ENCODE measurements at regions of chr6 and their contacts with region 1.

Region 1: DNA sequence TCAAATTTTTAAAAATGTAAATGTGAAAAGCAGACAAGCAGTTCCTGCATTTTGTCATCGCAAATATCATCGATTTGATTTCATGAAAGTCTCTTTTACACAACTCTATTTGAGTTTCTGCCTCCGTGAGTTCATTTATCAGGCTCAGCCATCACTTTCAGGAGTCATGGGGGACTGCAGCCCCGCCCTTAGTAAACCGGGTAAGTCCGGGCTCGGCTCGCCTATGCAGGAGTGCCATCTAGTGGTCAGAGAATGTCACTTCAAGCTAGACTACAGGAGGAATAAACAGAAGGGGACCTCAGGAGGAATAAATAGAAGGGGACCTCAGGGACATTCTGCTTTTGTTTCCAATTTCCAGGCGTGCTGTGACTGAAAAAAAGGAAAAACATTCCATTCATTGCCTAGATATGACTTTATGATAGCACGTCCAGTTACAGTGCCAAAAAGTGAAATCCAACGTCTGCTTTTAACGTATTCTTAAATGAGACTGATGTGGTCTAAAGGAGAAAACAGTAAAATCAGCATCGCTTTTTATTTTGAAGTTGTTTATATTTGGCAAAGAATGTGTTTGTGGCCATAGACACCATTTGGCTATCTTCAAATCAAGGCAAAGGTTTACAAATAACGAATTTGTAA is 333.9 kb downstream of the HACE1 start:
- DNase-seq: peak; percentile 75
- H3K4me3 Mint-ChIP-seq: peak overlapping the region; percentile 27
- H3K27ac Mint-ChIP-seq: no peak overlapping the region
- H3K4me1 Mint-ChIP-seq: peaks cover 5% of the 10 kb centered on the region
- H3K27me3 Mint-ChIP-seq: peaks cover 9% of the 10 kb centered on the region

Region 2: DNA sequence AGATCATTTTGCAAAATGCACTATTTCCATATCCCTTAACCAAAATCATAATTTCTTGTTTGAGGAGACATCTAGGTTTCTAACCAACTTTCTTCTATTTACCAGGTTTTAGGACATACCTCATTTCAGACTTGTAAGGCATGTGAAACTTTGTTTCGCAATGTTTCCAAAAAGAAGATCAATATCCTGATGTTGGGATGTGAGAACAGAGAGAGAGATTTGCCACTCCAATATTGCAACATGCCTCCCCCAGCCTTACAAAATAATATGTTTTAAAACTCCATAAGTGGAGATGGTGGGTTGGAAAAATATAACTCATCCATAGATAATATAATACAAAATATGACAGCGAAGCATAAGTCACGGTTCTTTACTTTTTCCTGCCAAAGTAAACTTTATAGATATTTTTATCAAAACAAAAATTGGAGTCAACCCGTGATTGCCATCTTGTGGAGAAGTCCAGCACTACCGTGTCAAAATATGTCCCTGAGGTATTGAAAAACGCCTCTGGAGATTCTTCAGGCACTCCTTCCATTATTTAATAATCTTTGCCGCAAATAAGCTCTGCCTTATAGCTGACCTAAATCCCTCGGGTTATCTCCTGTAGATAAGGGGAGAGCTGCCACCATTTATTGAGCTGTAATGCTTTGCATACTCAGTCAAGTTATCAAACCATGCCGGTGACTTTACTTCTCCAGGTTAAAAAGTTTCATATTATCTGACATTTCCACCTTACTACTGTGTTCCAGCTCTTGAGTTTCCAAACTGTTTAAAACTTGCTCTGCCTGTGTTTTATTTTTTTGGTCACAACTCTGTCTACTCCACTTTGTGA is 200.2 kb before region 1 on chr6:
- CTCF ChIA-PET with region 1: no interaction called
- POLR2A ChIA-PET with region 1: no interaction called
- intact Hi-C with region 1: loop called (anchors 10 kb)
- DNase-seq: no peak
- H3K4me3 Mint-ChIP-seq: no peak overlapping the region
- H3K27ac Mint-ChIP-seq: no peak overlapping the region
- H3K4me1 Mint-ChIP-seq: no peaks in the 10 kb centered on the region
- H3K27me3 Mint-ChIP-seq: no peaks in the 10 kb centered on the region

Region 3: GRCh38 chr6:104537180-104537579 is 11.4 kb after region 1 on chr6:
- CTCF ChIA-PET with region 1: interaction called, 11 read pairs
- POLR2A ChIA-PET with region 1: no interaction called
- intact Hi-C with region 1: no loop called
- DNase-seq: no peak
- H3K4me3 Mint-ChIP-seq: no peak overlapping the region
- H3K27ac Mint-ChIP-seq: no peak overlapping the region
- H3K4me1 Mint-ChIP-seq: no peaks in the 10 kb centered on the region
- H3K27me3 Mint-ChIP-seq: peaks cover 6% of the 10 kb centered on the region